ENCODE measurements at regions of chr14 and their contacts with region 1.

Region 1: GRCh38 chr14:71753126-71753830 is 179.0 kb upstream of the RGS6 start:
- DNase-seq: no peak
- H3K4me3 ChIP-seq: no peak overlapping the region
- H3K27me3 ChIP-seq: no peaks in the 10 kb centered on the region
- CTCF ChIP-seq: peak; percentile 93

Region 2: DNA sequence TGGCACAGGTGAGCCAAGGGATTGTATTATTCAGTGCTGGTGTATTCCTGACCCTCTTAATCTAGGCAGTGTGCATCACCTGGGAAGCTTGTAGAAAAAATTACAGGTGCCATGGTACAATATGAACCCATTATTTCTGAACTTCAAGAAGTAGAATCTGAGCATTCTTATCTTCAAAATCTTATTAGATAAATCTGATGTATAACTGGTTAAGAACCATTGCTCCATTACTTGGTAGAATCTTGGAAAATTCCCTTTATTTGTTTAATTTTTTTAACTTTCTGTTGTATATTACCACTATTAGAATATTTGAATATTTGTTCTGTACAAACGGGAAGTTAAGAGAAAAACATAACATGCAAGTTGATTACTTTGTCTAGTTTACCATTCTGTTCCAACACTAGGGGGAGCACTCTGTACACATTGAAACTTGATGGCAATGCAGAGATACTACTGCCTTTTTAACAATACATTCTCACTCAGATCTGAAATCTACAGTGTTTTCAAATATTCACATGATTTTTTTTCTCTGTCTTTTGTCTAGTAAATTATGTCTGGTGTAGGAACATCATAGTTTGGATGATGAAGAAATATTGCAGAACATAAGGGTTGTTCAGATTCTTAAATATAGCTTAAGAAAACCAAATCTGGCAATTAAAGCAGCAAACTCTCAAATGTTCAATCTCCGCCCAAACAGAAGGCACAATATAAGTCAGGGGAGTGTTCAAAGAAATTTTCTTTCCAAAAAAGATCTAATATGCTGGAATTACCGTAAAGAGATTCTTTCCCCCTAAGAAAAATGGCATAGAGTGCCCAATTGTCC is 649.4 kb before region 1 on chr14:
- CTCF ChIA-PET with region 1: interaction called, 15 read pairs
- POLR2A ChIA-PET with region 1: no interaction called
- DNase-seq: no peak
- H3K4me3 ChIP-seq: no peak overlapping the region
- H3K27me3 ChIP-seq: no peaks in the 10 kb centered on the region
- CTCF ChIP-seq: peak; percentile 78

Region 3: GRCh38 chr14:71320107-71320733 is 433.1 kb before region 1 on chr14:
- CTCF ChIA-PET with region 1: interaction called, 18 read pairs
- POLR2A ChIA-PET with region 1: no interaction called
- DNase-seq: peak; percentile 89
- H3K4me3 ChIP-seq: peak within 1 kb of the TSS; percentile 92
- H3K27me3 ChIP-seq: no peaks in the 10 kb centered on the region
- CTCF ChIP-seq: no peak

Region 4: DNA sequence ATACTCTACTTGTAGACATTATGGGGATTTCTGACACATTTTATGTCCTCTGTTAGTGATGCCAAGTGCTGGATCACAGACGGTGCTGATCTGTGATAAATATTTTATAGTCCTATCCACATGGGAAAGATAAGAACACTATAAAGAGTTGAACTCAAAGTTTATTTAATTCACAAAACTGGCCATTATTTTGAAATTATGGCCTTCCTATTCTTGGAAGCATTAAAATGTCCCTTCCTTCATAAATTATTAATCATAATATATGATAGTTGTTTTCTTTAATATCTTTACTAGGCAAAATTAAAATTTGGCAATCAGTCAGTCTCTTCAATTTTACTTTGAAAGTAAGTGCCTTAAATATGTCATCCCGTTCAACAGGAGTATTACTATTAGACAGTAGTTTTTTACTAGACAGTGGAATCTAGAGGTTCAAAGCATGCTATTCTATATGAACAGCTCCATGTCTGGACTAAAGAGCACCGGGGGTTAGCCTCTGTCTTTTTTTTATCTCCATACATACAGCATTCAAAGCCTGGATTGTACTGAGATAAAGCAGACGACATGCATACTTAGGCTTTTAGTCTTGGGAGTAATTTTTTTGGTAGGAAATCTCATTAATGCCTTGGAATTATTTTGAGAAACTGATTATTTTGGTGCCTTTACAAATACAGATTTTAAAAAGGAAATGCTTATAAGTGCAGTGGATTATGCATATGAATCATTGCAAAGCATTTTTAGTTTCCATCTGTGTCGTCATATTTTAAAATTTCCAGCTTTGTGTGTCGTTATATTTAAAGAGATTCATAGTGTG is 127.2 kb before region 1 on chr14:
- CTCF ChIA-PET with region 1: no interaction called
- POLR2A ChIA-PET with region 1: no interaction called
- DNase-seq: no peak
- H3K4me3 ChIP-seq: no peak overlapping the region
- H3K27me3 ChIP-seq: no peaks in the 10 kb centered on the region
- CTCF ChIP-seq: no peak

Region 5: DNA sequence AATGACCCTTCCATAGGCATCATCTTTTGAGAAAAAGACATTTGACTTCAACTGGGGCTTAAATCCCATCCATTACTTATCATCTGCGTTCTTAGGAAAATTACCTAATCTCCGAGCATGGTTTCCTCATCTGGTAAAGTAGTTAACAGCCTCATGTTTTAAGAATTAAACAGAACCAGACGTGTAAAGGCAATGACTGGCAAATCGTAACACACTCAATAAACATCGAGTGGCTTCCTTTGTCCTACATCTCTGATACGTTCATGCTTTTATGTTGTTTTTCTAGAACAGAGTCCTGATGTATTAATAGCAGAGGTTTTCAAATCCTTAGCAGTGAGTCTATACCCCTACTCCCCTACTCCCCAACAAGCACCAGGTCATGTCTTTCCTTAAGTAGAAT is 10.8 kb before region 1 on chr14:
- CTCF ChIA-PET with region 1: interaction called, 21 read pairs
- POLR2A ChIA-PET with region 1: no interaction called
- DNase-seq: peak; percentile 52
- H3K4me3 ChIP-seq: no peak overlapping the region
- H3K27me3 ChIP-seq: no peaks in the 10 kb centered on the region
- CTCF ChIP-seq: no peak

Region 6: GRCh38 chr14:71855399-71856036 is 102.2 kb after region 1 on chr14:
- CTCF ChIA-PET with region 1: interaction called, 33 read pairs
- POLR2A ChIA-PET with region 1: no interaction called
- DNase-seq: peak; percentile 5
- H3K4me3 ChIP-seq: no peak overlapping the region
- H3K27me3 ChIP-seq: 0 out of 2 replicates have a peak, but pooled peaks cover 1% of the 10 kb centered on the region
- CTCF ChIP-seq: peak; percentile 89

Measured in BJ (cell line).